Psoas muscle (tissue), 8 donors: ENCODE measurements at regions of chr10 and their contacts with region 1.

Region 1: GRCh38 chr10:48369555-48369954 is 63.1 kb downstream of the MAPK8 start:
- DNase-seq: no peak
- ATAC-seq: no peak
- H3K4me3 ChIP-seq: no peak overlapping the region
- H3K27ac ChIP-seq: no peak overlapping the region
- H3K4me1 ChIP-seq: peaks cover 12% of the 10 kb centered on the region
- H3K27me3 ChIP-seq: no peaks in the 10 kb centered on the region
- CTCF ChIP-seq: no peak

Region 2: GRCh38 chr10:48253970-48254657 is 115.4 kb before region 1 on chr10:
- intact Hi-C with region 1: no loop called
- DNase-seq: no peak
- ATAC-seq: no peak
- H3K4me3 ChIP-seq: no peak overlapping the region
- H3K27ac ChIP-seq: no peak overlapping the region
- H3K4me1 ChIP-seq: no peaks in the 10 kb centered on the region
- H3K27me3 ChIP-seq: peaks cover 0 to 4% (median 0%) of the 10 kb centered on the region in 3 donors
- CTCF ChIP-seq: no peak

Region 3: DNA sequence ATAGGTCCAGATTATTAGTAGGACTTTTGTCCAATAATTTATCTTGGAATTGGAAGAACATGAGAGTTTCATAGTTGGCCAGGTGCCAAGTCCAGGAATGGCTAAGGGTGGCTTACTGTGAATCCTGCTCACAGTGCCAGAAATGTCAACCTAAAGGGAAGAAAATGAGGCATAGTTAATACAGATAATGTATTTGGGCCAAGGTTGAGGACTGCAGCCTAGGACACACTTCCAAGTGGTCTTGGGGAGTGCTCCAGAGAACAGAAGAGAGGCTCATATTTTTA is 15.1 kb after region 1 on chr10:
- intact Hi-C with region 1: loop called in 1 of 2 experiments (anchors 2 kb)
- DNase-seq: no peak
- ATAC-seq: no peak
- H3K4me3 ChIP-seq: no peak overlapping the region
- H3K27ac ChIP-seq: no peak overlapping the region
- H3K4me1 ChIP-seq: peaks cover 14% of the 10 kb centered on the region
- H3K27me3 ChIP-seq: no peaks in the 10 kb centered on the region
- CTCF ChIP-seq: no peak

Region 4: DNA sequence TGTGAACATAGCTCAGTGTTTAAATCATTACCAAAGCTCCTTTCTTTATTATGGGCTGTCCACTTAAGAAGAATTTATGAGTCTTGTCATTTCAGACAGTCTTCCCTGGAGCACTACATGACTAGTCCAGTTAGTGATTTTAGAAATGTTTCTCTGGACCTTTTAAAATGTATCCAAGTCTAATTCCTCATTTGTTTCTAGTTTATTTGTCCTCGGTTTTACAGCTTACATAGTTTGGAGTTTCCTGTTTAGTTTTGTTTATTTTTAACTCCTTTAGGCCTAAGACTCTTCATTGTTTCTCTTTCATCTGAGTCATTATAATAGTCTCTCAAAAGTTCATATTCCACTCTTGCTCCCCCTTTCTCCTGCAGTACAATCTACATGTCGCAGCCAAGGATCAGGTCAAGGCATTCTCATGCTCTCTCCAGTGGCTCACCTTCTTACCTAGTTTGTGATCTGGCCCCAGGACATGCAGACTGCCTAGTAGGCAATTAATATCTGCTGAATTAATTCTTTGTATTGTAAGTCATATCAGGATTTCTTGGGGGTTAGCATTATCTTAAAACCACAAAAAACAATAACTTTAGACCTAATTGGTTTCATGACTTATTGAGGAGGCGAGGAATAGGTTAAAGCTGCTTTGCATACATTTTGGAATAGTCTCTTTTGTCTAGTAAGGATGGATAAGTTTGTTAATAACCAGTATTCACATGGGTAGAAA is 30.7 kb after region 1 on chr10:
- intact Hi-C with region 1: no loop called
- DNase-seq: no peak
- ATAC-seq: no peak
- H3K4me3 ChIP-seq: no peak overlapping the region
- H3K27ac ChIP-seq: no peak overlapping the region
- H3K4me1 ChIP-seq: peaks cover 25% of the 10 kb centered on the region
- H3K27me3 ChIP-seq: no peaks in the 10 kb centered on the region
- CTCF ChIP-seq: no peak

Region 5: DNA sequence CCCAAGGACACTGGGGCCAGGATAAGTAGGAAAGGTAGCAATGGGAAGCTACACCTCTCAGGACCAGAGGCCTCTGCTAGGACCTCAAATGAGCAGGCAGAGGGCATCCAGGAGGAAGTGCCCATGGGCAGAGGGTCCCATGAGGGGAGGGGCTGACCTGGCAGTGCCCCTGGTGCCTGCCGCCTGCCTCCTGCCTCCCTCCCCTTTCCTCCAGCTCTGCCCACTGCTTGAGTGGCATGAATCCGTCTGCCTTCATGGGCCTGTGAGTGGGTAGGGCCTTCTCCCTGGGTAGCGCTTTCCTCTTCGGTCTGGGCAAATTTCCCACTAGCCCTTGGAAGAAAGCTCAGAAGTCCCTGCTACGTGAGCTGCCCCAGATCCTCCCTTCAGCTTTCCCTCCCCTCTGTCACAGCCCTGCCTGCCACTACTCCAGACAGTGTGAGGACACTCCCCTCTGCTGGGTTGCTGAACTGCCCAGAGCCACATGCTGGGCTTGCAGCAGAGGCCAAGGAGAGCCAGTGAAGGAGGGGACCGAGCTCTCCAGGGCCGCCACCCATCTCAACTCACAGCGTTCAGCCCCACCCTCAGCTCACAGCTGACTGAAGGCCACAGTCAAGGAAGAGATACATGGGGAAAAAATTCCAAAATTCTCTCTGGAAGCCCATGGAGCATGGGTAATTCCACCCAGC is 93.9 kb after region 1 on chr10:
- intact Hi-C with region 1: no loop called
- DNase-seq: no peak
- ATAC-seq: peak in 1 of 4 donors; percentile 59
- H3K4me3 ChIP-seq: no peak overlapping the region
- H3K27ac ChIP-seq: no peak overlapping the region
- H3K4me1 ChIP-seq: peaks cover 14% of the 10 kb centered on the region
- H3K27me3 ChIP-seq: peaks cover 0 to 3% (median 0%) of the 10 kb centered on the region in 3 donors
- CTCF ChIP-seq: no peak